Right ventricle myocardium inferior (tissue), 1 donor: ENCODE measurements at regions of chr10 and their contacts with region 1.

Region 1: DNA sequence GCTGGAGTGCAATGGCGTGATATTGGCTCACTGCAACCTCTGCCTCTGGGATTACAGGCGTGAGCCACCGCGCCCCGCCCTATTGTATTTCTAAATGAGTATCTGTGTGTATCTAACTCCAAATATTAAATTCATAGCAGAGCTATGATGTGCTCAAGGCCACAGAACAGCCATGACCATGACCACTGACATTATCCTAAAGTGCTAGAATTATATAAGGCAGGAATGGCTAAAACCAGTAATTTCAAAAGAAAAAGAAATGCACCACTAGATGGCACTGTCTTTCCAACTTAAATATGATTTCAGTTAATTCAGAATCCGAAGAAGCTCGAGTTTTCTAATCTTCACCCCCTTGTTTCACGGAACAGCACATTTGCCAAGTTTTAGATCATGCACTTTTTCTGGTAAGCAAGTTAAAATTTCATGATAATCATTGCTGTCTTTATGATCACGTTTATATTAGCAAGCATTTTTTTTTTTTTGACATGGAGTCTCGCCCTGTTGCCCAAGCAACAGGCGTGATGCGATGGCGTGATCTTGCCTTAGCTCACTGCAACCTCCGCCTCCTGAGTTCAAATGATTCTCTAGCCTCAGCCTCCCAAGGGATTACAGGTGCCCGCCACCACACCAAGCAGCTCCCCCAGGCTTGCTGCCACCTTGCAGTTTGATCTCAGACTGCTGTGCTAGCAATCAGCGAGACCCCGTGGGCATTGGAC is 65.3 kb downstream of the OR13A1 start:
- DNase-seq: no peak
- ATAC-seq: peak; percentile 37

Region 2: DNA sequence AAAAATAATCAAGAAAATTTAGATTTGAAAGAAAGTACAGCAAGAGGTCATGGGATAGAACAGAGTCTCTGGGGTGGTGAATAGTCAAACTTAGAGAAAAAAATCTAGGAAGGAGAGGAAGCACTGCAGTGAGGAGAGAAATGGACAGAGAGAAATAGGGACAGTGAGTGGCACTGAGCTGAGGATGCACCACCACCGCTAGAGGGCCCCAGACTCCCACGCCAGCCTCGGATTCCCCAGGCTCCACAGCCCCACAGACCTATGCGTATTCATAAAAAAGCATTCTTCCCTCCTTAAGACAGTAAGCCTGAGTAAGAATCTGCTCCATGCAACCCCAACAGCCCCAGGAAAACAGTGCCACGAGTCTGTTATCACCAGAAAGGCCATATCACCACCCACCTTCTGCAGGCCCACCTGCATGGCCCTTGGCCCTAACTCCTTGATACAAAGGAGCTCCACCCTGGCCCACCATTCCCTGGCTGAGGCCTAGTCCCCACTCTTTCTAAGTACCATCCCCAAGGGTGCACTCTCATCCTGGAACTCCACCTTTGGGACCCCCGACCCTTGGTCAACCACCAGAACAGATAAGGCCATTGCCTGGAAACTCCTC is 214.9 kb after region 1 on chr10:
- intact Hi-C with region 1: loop called (anchors 5 kb)
- DNase-seq: peak; percentile 88
- ATAC-seq: peak; percentile 90